ENCODE measurements at regions of chr3 and their contacts with region 1.

Region 1: GRCh38 chr3:4906107-4906621 is 73.1 kb upstream of the BHLHE40 start:
- DNase-seq: peak; percentile 71
- H3K4me3 Mint-ChIP-seq: peak overlapping the region; percentile 60
- H3K27ac Mint-ChIP-seq: peak overlapping the region; percentile 88
- H3K4me1 Mint-ChIP-seq: peaks cover 77% of the 10 kb centered on the region
- H3K27me3 Mint-ChIP-seq: no peaks in the 10 kb centered on the region

Region 2: GRCh38 chr3:4722103-4722502 is 184.1 kb before region 1 on chr3:
- intact Hi-C with region 1: loop called (anchors 5 kb)
- DNase-seq: peak; percentile 80
- H3K4me3 Mint-ChIP-seq: no peak overlapping the region
- H3K27ac Mint-ChIP-seq: peak overlapping the region; percentile 68
- H3K4me1 Mint-ChIP-seq: peaks cover 61% of the 10 kb centered on the region
- H3K27me3 Mint-ChIP-seq: no peaks in the 10 kb centered on the region

Region 3: DNA sequence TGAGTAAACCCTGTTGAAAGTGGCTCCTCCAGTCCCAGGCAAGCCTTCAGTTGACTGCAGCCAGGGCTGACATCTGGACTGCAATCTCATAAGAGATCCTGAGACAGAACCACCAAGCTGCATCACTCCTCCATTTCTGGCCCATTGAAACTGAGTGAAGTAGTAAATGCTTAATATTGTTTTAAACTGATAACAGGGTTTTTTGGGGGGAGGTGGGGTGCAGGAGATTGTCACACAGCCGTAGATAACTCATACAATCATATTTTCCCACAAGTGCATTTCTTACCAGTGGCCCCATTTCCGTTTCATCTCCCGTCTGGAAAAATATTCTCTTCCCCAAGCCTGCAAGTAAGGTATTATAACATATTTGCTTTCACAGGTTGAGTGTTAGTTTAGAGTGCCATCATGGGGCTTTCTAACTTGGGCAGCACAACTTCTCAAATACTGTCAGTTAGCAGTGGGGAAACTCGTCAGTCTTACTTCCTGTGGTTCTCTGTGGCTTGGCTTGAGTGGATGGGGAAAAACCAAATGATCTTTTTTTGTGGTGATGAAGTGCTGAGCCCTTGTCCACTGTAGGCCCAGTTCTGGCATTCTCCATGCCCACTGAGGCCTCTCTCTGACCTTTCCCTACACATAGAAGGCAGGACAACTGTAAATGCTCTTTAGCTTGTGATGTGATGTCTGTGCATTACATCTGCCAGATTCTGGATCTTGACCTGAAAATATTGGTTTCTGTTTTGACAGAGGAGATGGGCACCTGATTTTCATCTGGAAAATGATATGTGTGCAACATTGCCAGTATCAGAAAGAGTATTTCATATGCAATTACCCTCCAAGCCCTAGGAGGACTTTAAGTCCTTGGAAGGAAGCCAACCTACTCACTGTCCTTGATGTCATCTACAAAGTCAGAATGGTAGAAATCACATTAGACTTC is 17.0 kb before region 1 on chr3:
- intact Hi-C with region 1: loop called (anchors 1 kb)
- DNase-seq: peak; percentile 87
- H3K4me3 Mint-ChIP-seq: peak overlapping the region; percentile 49
- H3K27ac Mint-ChIP-seq: peak overlapping the region; percentile 89
- H3K4me1 Mint-ChIP-seq: peaks cover 44% of the 10 kb centered on the region
- H3K27me3 Mint-ChIP-seq: no peaks in the 10 kb centered on the region

Region 4: GRCh38 chr3:5026331-5027218 is 120.4 kb after region 1 on chr3:
- intact Hi-C with region 1: loop called (anchors 1 kb)
- DNase-seq: peak; percentile 90
- H3K4me3 Mint-ChIP-seq: peak overlapping the region; percentile 87
- H3K27ac Mint-ChIP-seq: peak overlapping the region; percentile 93
- H3K4me1 Mint-ChIP-seq: peaks cover 49% of the 10 kb centered on the region
- H3K27me3 Mint-ChIP-seq: no peaks in the 10 kb centered on the region

Region 5: GRCh38 chr3:5194341-5195159 is 288.4 kb after region 1 on chr3:
- intact Hi-C with region 1: loop called (anchors 5 kb)
- DNase-seq: peak; percentile 85
- H3K4me3 Mint-ChIP-seq: peak overlapping the region; percentile 79
- H3K27ac Mint-ChIP-seq: peak overlapping the region; percentile 94
- H3K4me1 Mint-ChIP-seq: peaks cover 85% of the 10 kb centered on the region
- H3K27me3 Mint-ChIP-seq: no peaks in the 10 kb centered on the region